Activated naive CD4-positive, alpha-beta T cell treated with anti-CD3 and anti-CD28 coated beads for 36 hours (primary cell): ENCODE measurements at regions of chr17 and their contacts with region 1.

Region 1: GRCh38 chr17:74203439-74204240 is at the start of gene RPL38:
- DNase-seq: peak; percentile 98
- H3K4me3 Mint-ChIP-seq: peak within 1 kb of the TSS; percentile 100
- H3K27ac Mint-ChIP-seq: peak within 1 kb of the TSS; percentile 98
- H3K4me1 Mint-ChIP-seq: peaks cover 35% of the 10 kb centered on the region
- H3K27me3 Mint-ChIP-seq: peaks cover 13% of the 10 kb centered on the region
- total RNA-seq, gene RPL38: 1,784 to 1,916 TPM

Region 2: DNA sequence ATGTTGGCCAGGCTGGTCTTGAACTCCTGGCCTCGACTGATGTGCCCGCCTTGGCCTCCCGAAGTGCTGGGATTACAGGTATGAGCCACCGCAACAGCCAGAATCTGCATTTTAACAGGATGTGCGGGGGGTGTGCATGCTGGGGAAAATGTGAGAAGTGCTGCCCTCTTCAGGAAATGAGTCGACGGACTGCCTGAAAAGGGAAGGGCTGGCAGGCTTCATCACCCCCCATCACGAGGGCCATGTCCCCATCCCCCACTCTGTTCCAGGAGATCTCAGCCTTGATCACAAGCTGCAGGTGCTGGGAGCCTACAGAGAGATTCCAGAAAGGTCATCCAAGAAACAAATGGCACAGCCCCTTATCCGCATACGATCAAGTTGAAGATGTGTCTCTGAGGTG is 195.4 kb before region 1 on chr17:
- CTCF ChIA-PET with region 1: interaction called, 3 read pairs
- intact Hi-C with region 1: loop called (anchors 2 kb)
- DNase-seq: peak; percentile 73
- H3K4me3 Mint-ChIP-seq: no peak overlapping the region
- H3K27ac Mint-ChIP-seq: no peak overlapping the region
- H3K4me1 Mint-ChIP-seq: peaks cover 7% of the 10 kb centered on the region
- H3K27me3 Mint-ChIP-seq: peaks cover 5% of the 10 kb centered on the region

Region 3: GRCh38 chr17:74089869-74090464 is 113.7 kb before region 1 on chr17:
- CTCF ChIA-PET with region 1: interaction called, 12 read pairs
- intact Hi-C with region 1: no loop called
- DNase-seq: peak; percentile 79
- H3K4me3 Mint-ChIP-seq: no peak overlapping the region
- H3K27ac Mint-ChIP-seq: no peak overlapping the region
- H3K4me1 Mint-ChIP-seq: no peaks in the 10 kb centered on the region
- H3K27me3 Mint-ChIP-seq: peaks cover 3% of the 10 kb centered on the region

Region 4: GRCh38 chr17:74190807-74191406 is 12.7 kb before region 1 on chr17:
- CTCF ChIA-PET with region 1: interaction called, 10 read pairs
- intact Hi-C with region 1: no loop called
- DNase-seq: no peak
- H3K4me3 Mint-ChIP-seq: no peak overlapping the region
- H3K27ac Mint-ChIP-seq: no peak overlapping the region
- H3K4me1 Mint-ChIP-seq: no peaks in the 10 kb centered on the region
- H3K27me3 Mint-ChIP-seq: peaks cover 12% of the 10 kb centered on the region

Region 5: DNA sequence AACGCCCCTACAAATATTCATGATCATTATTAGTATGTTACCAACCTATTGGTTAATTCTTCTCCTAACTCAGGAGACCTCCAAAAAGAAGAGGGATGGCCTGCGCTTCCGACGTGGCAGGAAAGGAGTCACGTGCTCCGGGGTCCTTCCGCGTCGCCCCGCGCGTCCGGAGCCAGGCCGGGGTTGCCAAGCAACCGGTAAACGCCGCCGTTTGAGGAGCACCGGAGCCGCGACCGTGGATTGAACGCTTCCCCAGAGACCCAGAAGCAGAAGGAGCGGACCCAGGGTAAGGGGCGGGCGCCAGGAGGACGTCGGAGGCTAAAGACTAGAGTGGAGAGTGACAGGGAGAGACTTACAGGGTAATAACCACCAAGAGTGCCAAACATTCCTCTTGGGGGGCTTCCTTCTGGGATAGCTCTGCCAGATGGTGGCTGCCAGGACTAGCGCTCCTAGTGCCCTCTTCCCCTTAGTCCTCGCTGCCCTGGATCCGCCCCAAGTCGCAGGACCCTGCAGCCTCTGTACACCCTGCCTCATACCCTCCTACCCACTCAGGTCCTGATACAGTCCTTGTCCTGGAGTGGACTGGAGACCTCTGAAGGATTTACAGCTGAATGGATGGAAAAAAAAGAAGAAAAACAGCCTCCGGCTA is 70.5 kb after region 1 on chr17 and contains the start of gene DNAI2:
- CTCF ChIA-PET with region 1: no interaction called
- intact Hi-C with region 1: no loop called
- DNase-seq: peak; percentile 24
- H3K4me3 Mint-ChIP-seq: peak within 1 kb of the TSS; percentile 53
- H3K27ac Mint-ChIP-seq: no peak within 1 kb of the TSS
- H3K4me1 Mint-ChIP-seq: peaks cover 14% of the 10 kb centered on the region
- H3K27me3 Mint-ChIP-seq: peaks cover 3% of the 10 kb centered on the region
- total RNA-seq, gene DNAI2: 0.12 to 0.25 TPM